Posterior cingulate gyrus (tissue), 11 donors: ENCODE measurements at regions of chr2 and their contacts with region 1.

Region 1: DNA sequence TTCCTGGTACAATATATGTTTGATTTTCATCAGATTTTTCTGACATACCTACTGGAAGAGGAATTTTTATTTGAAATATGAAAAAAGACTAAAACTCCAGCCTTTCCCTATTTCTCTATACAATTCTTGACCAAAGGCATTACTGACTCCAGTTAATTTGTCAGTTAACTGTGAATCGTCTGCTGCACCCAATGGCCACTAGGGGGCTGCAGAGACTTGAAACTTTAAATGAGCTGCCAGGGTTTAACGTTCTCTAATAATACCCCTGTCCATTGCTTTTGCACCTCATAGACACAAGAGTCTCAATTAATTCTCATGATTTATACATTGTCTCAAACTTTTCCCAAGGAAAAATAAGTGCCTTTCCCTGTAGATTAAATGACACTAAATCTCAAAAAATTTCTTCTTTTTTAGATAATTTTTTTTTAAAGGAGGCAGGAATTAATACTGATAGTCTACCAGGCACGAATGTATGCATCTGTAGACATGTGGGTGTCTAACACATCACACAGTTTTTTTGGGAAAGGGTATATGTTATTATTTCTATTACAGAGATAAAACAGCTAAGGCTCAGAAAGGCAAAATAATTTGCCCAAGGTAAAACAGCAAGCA is 1.8 kb upstream of the ALK start:
- DNase-seq: peak; percentile 44 to 94 (median 69)

Region 2: DNA sequence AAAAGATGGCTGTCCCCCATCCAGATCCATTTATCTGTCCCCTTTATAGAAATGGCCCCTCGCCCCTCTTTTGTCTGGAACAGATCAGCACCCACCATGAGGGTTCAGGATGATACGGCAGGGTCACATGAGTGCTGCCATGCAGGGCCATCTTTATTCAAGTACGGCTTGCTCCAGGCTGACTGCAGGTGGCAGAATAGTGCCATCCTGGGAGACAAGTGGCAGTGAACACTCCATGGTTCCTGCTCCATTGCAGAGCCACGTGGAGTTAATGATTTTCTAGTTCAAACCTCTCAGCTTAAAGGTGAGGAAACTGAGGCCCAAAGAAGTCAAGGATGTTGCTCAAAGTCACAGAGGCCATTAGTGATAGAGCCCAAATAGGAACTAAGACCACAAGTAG is 627.4 kb before region 1 on chr2:
- intact Hi-C with region 1: loop called (anchors 5 kb)
- DNase-seq: peak in 6 of 10 donors; percentile 21 to 90 (median 60)

Region 3: GRCh38 chr2:30026087-30027055 is 103.2 kb after region 1 on chr2:
- intact Hi-C with region 1: loop called (anchors 1 kb)
- DNase-seq: peak; percentile 36 to 95 (median 77)